Heart left ventricle (tissue), 16 donors: ENCODE measurements at regions of chr2 and their contacts with region 1.

Region 1: DNA sequence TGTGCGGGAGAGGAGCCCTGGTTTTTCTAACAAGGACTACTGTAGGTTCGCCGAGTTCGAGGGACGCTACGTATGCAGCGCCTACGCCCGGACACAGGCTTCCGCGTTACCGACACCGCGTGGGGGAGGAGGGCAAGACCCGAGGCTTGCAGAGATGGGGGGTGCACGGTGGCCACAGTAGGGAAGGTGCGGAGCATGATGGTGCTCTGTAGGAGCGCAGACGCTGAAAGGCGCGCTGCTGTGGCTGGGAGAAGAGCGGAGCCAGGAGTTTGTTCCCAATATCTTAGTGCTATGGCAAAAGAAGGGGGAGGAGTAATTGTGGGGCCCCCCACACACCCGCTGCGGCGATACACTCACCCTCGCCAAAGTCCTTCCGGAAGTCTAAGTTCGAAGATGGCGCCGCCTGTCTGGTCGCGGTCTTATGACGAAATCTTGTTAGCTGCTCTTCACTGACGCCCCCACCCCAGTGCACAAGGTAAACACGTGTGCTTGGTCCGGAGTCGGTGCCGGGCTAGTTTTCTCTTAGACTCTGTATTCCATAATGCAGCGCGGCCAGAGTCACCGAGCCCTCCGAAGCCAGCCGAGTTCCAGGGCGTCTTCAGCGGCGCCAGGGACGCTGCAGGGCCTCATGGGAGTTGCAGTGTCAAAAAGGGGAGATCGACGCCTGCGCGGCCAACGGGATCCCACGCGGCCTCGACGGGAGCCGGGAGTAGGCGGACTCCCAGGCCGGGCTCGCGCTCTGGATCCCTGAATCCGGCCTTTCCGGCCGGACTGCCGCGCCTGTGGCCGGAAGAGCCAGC is at the start of gene GTF3C2:
- DNase-seq: peak; percentile 95 to 97 (median 95)
- ATAC-seq: peak; percentile 97 to 98 (median 98)
- H3K4me3 ChIP-seq: peak within 1 kb of the TSS; percentile 61 to 97 (median 84)
- H3K27ac ChIP-seq: peak within 1 kb of the TSS; percentile 66 to 98 (median 88)
- H3K4me1 ChIP-seq: peaks cover 4 to 57% (median 27%) of the 10 kb centered on the region in 12 donors
- H3K27me3 ChIP-seq: no peaks in the 10 kb centered on the region
- CTCF ChIP-seq: peak in 2 of 12 donors; percentile 10 to 21
- POLR2A ChIP-seq: peak in 1 of 2 donors; percentile 44
- total RNA-seq, gene GTF3C2: 19.9 to 42.6 (median 28.3) TPM

Region 2: GRCh38 chr2:27264753-27265535 is 91.6 kb before region 1 on chr2:
- intact Hi-C with region 1: no loop called
- DNase-seq: peak; percentile 75 to 86 (median 78)
- ATAC-seq: peak; percentile 62 to 85 (median 79)
- H3K4me3 ChIP-seq: peak overlapping the region; percentile 10 to 81 (median 62)
- H3K27ac ChIP-seq: peak overlapping the region in 10 of 12 donors; percentile 17 to 80 (median 57)
- H3K4me1 ChIP-seq: peaks cover 0 to 43% (median 26%) of the 10 kb centered on the region in 12 donors
- H3K27me3 ChIP-seq: peaks cover 17 to 70% (median 38%) of the 10 kb centered on the region in 9 donors
- CTCF ChIP-seq: peak; percentile 30 to 71 (median 60)
- POLR2A ChIP-seq: no peak

Region 3: GRCh38 chr2:27322766-27323595 is 33.6 kb before region 1 on chr2 and contains the start of gene MPV17:
- intact Hi-C with region 1: loop called in 4 of 10 experiments (anchors 1 to 5 kb)
- DNase-seq: peak; percentile 93 to 96 (median 93)
- ATAC-seq: peak; percentile 83 to 95 (median 92)
- H3K4me3 ChIP-seq: peak within 1 kb of the TSS; percentile 62 to 95 (median 74)
- H3K27ac ChIP-seq: peak within 1 kb of the TSS; percentile 83 to 99 (median 92)
- H3K4me1 ChIP-seq: peaks cover 4 to 40% (median 23%) of the 10 kb centered on the region in 12 donors
- H3K27me3 ChIP-seq: no peaks in the 10 kb centered on the region
- CTCF ChIP-seq: no peak
- POLR2A ChIP-seq: peak; percentile 48 to 86
- total RNA-seq, gene MPV17: 48.8 to 103 (median 65.7) TPM

Region 4: GRCh38 chr2:27409321-27410073 is 52.9 kb after region 1 on chr2 and contains the start of gene PPM1G:
- intact Hi-C with region 1: loop called in 1 of 10 experiments (anchors 2 kb)
- DNase-seq: peak; percentile 95 to 98 (median 96)
- ATAC-seq: peak; percentile 99 to 100 (median 100)
- H3K4me3 ChIP-seq: peak within 1 kb of the TSS; percentile 69 to 100 (median 98)
- H3K27ac ChIP-seq: peak within 1 kb of the TSS; percentile 11 to 96 (median 90)
- H3K4me1 ChIP-seq: peaks cover 0 to 33% (median 20%) of the 10 kb centered on the region in 12 donors
- H3K27me3 ChIP-seq: no peaks in the 10 kb centered on the region
- CTCF ChIP-seq: peak in 1 of 12 donors; percentile 13
- POLR2A ChIP-seq: peak in 1 of 2 donors; percentile 72
- total RNA-seq, gene PPM1G: 31.7 to 49.7 (median 40.2) TPM